ENCODE measurements at regions of chr6 and their contacts with region 1.

Region 1: DNA sequence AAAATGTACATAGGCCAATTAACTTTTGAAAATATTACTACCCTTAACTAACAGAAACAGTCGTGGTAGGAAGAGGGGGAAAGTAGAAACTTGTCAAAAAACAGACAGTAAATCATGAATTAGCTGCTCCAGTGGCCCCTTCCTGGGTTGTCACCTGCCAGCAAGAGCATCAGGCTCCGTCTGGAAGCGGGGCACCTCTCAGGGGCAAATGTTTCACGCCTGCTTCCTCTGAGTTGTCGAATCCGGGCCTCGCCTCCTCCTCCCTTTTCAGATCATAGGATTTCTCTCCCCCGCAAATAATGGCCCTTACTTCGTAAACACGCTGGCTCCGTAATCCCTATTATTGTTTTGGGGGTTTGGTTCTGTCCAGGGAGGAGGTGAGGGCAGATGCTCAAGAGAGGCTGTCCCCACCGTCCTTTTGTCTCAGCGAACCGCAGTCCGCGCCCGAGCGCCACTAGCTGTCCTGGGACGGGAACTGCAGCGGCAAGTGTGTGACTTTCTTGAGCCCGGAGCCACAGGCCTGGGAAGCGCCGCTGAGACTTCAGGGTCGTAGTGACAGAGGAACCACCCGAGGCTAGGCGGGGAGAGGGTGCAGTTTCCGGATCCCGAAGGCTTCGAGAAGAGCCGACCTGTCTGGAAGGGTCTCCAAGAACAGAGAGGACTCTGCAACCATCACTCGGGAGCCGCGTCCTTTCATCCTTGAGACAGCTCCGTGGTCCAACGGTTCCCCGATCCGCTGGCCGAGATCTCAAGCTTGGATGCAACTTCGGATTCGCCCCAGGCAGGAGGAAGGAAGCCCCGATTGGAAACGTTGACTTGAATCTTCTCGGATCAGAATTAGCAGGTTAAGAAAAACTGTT is 214.5 kb upstream of the ZNF184 start:
- DNase-seq: peak; percentile 91
- ATAC-seq: peak; percentile 81
- H3K4me3 Mint-ChIP-seq: peak overlapping the region; percentile 87
- H3K27ac Mint-ChIP-seq: peak overlapping the region; percentile 84
- H3K4me1 Mint-ChIP-seq: peaks cover 20% of the 10 kb centered on the region
- H3K27me3 Mint-ChIP-seq: peaks cover 9% of the 10 kb centered on the region

Region 2: GRCh38 chr6:26322645-26323482 is 1364.5 kb before region 1 on chr6:
- CTCF ChIA-PET with region 1: no interaction called
- POLR2A ChIA-PET with region 1: no interaction called
- intact Hi-C with region 1: loop called in 1 of 2 experiments (anchors 10 kb)
- DNase-seq: peak; percentile 77
- ATAC-seq: peak; percentile 66
- H3K4me3 Mint-ChIP-seq: peak overlapping the region; percentile 84
- H3K27ac Mint-ChIP-seq: peak overlapping the region; percentile 93
- H3K4me1 Mint-ChIP-seq: peaks cover 28% of the 10 kb centered on the region
- H3K27me3 Mint-ChIP-seq: peaks cover 5% of the 10 kb centered on the region

Region 3: GRCh38 chr6:27157459-27158315 is 529.7 kb before region 1 on chr6:
- CTCF ChIA-PET with region 1: no interaction called
- POLR2A ChIA-PET with region 1: no interaction called
- intact Hi-C with region 1: loop called in 1 of 2 experiments (anchors 5 kb)
- DNase-seq: peak; percentile 91
- ATAC-seq: peak; percentile 84
- H3K4me3 Mint-ChIP-seq: peak overlapping the region; percentile 78
- H3K27ac Mint-ChIP-seq: peak overlapping the region; percentile 92
- H3K4me1 Mint-ChIP-seq: peaks cover 46% of the 10 kb centered on the region
- H3K27me3 Mint-ChIP-seq: no peaks in the 10 kb centered on the region

Region 4: DNA sequence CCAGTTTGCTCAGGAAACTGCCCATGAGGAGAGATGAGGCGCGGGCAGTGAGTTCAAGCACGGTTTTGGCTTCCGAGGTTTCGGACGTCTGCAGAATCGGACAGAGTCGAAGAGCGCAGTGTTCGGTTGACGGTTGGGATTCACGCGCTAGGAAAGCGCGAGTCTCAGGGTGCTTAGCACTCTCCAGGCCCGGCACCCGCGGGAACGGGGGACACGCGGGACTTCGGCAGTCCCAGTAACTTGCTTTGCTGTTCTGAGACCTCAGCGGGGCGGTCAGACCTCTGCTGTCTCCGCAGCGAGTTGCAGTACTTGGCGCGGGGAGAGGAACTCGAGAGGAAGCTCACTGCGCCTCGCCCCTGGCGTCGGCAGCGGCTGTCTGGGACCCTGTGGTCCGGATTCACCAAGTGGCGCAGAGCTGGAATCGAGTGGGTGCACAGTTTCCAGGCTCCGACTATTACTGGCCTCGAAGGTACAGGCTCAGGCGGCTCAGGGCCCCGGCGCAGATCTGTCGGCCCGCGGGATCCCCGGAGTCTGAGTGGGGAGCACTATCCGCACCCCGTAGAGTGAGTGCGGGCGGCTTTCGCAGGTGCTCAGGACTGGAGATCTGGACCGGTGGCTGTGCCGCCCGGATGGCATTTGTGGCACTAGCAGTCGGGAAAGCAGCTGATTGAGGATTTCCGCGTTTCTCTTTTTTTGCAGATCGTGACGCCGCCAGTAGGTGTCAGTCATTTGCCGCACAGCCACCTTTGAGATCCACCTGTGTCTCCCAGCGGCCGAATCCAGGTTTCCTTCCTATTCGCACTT is 375.0 kb before region 1 on chr6 and contains the start of gene POM121L2:
- CTCF ChIA-PET with region 1: interaction called, 4 read pairs
- POLR2A ChIA-PET with region 1: no interaction called
- intact Hi-C with region 1: loop called in 1 of 2 experiments (anchors 1 kb)
- DNase-seq: peak; percentile 77
- ATAC-seq: peak; percentile 69
- H3K4me3 Mint-ChIP-seq: peak within 1 kb of the TSS; percentile 71
- H3K27ac Mint-ChIP-seq: no peak within 1 kb of the TSS
- H3K4me1 Mint-ChIP-seq: peaks cover 4% of the 10 kb centered on the region
- H3K27me3 Mint-ChIP-seq: peaks cover 57% of the 10 kb centered on the region
- total RNA-seq, gene POM121L2: not detected

Region 5: GRCh38 chr6:27503436-27504030 is 183.9 kb before region 1 on chr6:
- CTCF ChIA-PET with region 1: interaction called, 4 read pairs
- POLR2A ChIA-PET with region 1: no interaction called
- intact Hi-C with region 1: loop called in 1 of 2 experiments (anchors 1 kb)
- DNase-seq: peak; percentile 87
- ATAC-seq: peak; percentile 40
- H3K4me3 Mint-ChIP-seq: peak overlapping the region; percentile 88
- H3K27ac Mint-ChIP-seq: peak overlapping the region; percentile 83
- H3K4me1 Mint-ChIP-seq: peaks cover 26% of the 10 kb centered on the region
- H3K27me3 Mint-ChIP-seq: peaks cover 4% of the 10 kb centered on the region

Region 6: DNA sequence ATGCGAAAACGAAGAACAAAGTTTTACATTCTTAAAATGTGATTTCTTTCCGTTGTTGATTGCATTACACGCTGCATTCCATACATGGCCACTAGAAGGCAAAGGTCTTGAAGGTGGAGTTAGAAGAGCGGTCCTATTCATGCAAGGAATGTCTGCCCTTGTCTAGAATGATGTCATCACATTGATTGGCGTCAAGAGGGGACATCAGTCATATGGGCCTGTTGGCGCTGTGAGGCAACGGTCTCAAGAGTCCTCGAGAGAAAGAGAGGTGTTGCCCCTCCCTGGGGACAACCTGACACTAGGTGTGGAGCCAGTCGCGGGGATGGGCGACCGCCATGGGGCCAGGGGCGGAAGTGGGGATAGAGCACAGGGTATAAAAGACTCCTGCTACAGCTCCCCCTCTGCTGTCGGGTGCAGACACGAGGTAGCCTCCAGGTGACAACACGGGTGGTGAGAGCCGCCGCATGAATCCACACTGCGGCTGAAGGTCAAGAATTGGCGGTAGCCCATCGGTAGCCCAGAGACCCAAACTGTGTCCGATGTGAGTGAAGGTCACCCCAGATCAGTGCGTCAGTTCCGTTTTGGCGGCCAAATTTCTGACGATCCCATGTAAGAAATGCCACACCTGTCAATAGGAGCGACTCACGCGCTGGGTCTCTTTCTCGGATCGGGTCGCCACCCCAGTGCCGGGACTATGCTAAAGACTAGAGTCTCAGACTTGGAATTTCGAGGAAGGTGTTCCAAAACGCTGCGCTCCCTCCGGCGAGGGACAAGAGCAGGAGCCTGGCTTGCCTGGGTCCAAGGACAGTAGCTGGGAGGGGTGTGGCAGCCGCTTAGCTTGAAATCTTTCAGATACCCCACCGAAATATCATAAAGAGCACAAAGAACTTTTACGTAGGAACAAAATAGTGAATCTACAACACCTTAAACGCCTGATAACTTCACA is 121.3 kb before region 1 on chr6:
- CTCF ChIA-PET with region 1: no interaction called
- POLR2A ChIA-PET with region 1: no interaction called
- intact Hi-C with region 1: no loop called
- DNase-seq: peak; percentile 14
- ATAC-seq: peak; percentile 55
- H3K4me3 Mint-ChIP-seq: peak overlapping the region; percentile 3
- H3K27ac Mint-ChIP-seq: no peak overlapping the region
- H3K4me1 Mint-ChIP-seq: peaks cover 6% of the 10 kb centered on the region
- H3K27me3 Mint-ChIP-seq: peaks cover 58% of the 10 kb centered on the region

Region 7: DNA sequence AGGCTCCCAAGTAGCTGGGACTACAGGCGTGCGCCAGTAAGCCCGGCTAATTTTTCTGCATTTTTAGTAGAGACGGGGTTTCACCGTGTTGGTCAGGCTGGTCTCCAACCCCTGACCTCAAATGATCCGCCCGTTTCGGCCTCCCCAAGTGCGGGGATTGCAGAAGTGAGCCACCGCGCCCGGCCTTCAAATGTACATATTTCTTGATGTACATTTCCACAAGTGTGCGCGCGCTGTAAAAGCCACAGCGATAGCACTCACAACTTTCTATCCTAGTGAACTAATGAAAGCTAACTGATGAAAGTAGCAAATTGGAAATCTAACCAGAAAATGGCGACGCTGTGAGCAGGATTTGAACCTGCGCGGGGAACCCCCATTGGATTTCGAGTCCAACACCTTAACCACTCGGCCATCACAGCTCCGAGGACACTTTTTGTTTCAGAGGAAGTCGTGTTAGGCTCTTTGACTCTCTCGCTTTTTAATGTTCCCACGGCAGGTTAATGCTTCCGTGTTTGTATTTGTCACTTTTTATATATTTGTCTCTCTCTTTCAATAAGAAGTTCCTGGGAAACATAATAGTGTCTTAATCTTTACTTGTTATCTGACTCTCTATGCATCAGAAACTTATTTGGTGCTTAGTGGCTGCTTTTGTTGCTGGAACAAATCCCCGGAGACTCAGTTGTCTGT is 15.1 kb before region 1 on chr6:
- CTCF ChIA-PET with region 1: interaction called, 8 read pairs
- POLR2A ChIA-PET with region 1: no interaction called
- intact Hi-C with region 1: loop called in 1 of 2 experiments (anchors 2 kb)
- DNase-seq: peak; percentile 71
- ATAC-seq: peak; percentile 70
- H3K4me3 Mint-ChIP-seq: peak overlapping the region; percentile 42
- H3K27ac Mint-ChIP-seq: no peak overlapping the region
- H3K4me1 Mint-ChIP-seq: peaks cover 26% of the 10 kb centered on the region
- H3K27me3 Mint-ChIP-seq: peaks cover 66% of the 10 kb centered on the region

Region 8: DNA sequence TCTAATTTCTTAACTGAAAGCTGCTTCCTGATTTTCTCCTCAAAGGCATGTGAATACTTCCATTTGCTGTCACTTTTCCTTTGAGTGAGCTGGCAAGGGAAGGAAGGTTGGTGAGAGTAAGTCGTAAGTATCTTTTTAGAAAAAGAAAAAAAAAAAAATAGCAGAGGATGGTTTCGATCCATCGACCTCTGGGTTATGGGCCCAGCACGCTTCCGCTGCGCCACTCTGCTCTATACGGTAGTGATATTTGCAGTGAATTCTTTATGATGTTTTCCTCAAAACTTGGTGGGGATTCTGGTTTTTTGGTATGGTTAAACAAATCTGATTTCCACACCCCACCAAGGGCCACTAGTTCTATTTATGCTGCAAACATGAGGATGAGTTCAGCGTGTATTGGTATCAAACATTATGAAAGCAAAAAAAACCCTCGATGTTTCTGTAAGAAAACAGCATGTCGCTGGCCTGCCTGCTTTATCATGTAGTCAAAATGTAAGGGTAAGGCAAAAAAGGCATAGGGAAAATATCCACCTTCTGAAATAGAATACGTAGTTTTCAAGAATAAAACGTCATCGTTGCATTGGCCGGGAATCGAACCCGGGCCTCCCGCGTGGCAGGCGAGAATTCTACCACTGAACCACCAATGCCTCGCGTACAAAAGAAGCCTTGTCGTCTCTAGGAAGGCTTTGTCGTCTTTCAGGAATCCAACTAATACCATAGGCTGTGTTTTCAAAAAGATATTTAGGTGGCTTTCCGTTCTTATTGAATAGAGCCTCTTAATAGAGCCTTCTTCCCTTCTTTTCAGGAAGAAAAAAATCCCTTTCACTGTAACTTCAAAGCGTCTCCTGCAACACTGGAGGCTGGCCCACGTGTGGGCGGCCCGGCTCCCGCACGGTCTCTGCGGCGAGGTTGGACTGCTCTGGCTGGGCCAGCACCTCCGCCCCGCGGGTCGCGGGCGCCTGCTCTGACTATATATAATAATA is 215.2 kb after region 1 on chr6:
- CTCF ChIA-PET with region 1: interaction called, 6 read pairs
- POLR2A ChIA-PET with region 1: no interaction called
- intact Hi-C with region 1: loop called in 1 of 2 experiments (anchors 5 kb)
- DNase-seq: peak; percentile 91
- ATAC-seq: peak; percentile 81
- H3K4me3 Mint-ChIP-seq: peak overlapping the region; percentile 74
- H3K27ac Mint-ChIP-seq: peak overlapping the region; percentile 89
- H3K4me1 Mint-ChIP-seq: peaks cover 5% of the 10 kb centered on the region
- H3K27me3 Mint-ChIP-seq: peaks cover 4% of the 10 kb centered on the region

Measured in activated CD4-positive, alpha-beta T cell treated with anti-CD3 and anti-CD28 coated beads for 36 hours (primary cell).